ENCODE measurements at regions of chrX and their contacts with region 1.

Region 1: GRCh38 chrX:132292793-132293192 is 73.5 kb upstream of the RAP2C start:
- DNase-seq: peak; percentile 35
- H3K4me3 ChIP-seq: no peak overlapping the region
- H3K27ac ChIP-seq: no peak overlapping the region
- H3K4me1 ChIP-seq: no peaks in the 10 kb centered on the region
- H3K27me3 ChIP-seq: peaks cover 0 to 2% of the 10 kb centered on the region in 2 experiments
- CTCF ChIP-seq: peak; percentile 29 to 30
- POLR2A ChIP-seq: no peak

Region 2: DNA sequence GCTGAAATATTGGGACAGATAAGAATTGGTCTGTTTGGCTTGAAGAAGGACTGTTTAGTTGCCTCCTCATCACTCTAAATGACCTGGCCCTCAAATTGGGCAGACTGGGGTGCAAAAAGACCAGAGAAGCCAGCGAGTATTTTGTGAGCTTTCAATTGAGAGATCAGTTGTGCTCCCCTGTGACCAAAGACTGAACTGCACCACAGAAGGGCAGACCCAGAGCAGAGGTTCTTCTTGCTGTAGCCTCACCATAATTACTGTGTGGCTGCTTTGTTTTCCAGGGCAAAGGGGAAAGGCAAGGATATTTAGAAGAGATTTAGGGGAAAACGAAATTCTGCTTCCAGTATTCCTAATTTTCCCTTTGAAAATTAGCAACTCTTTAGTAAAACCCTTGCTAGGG is 300.1 kb after region 1 on chrX:
- CTCF ChIA-PET with region 1: interaction called, 16 read pairs
- POLR2A ChIA-PET with region 1: no interaction called
- dilution Hi-C with region 1: no loop called
- intact Hi-C with region 1: loop called (anchors 1 kb)
- DNase-seq: peak; percentile 1
- H3K4me3 ChIP-seq: no peak overlapping the region
- H3K27ac ChIP-seq: no peak overlapping the region
- H3K4me1 ChIP-seq: no peaks in the 10 kb centered on the region
- H3K27me3 ChIP-seq: no peaks in the 10 kb centered on the region
- CTCF ChIP-seq: peak in 1 of 2 donors; percentile 17
- POLR2A ChIP-seq: no peak

Region 3: GRCh38 chrX:132622130-132622529 is 329.3 kb after region 1 on chrX:
- CTCF ChIA-PET with region 1: interaction called, 11 read pairs
- POLR2A ChIA-PET with region 1: no interaction called
- dilution Hi-C with region 1: no loop called
- intact Hi-C with region 1: no loop called
- DNase-seq: peak; percentile 37
- H3K4me3 ChIP-seq: no peak overlapping the region
- H3K27ac ChIP-seq: no peak overlapping the region
- H3K4me1 ChIP-seq: peaks cover 7% of the 10 kb centered on the region
- H3K27me3 ChIP-seq: no peaks in the 10 kb centered on the region
- CTCF ChIP-seq: no peak
- POLR2A ChIP-seq: no peak

Region 4: GRCh38 chrX:132631579-132632232 is 338.9 kb after region 1 on chrX:
- CTCF ChIA-PET with region 1: interaction called, 63 read pairs
- POLR2A ChIA-PET with region 1: no interaction called
- dilution Hi-C with region 1: no loop called
- intact Hi-C with region 1: loop called (anchors 1 kb)
- DNase-seq: peak; percentile 33
- H3K4me3 ChIP-seq: no peak overlapping the region
- H3K27ac ChIP-seq: no peak overlapping the region
- H3K4me1 ChIP-seq: no peaks in the 10 kb centered on the region
- H3K27me3 ChIP-seq: no peaks in the 10 kb centered on the region
- CTCF ChIP-seq: peak; percentile 27 to 30
- POLR2A ChIP-seq: no peak